ENCODE measurements at regions of chr7 and their contacts with region 1.

Region 1: DNA sequence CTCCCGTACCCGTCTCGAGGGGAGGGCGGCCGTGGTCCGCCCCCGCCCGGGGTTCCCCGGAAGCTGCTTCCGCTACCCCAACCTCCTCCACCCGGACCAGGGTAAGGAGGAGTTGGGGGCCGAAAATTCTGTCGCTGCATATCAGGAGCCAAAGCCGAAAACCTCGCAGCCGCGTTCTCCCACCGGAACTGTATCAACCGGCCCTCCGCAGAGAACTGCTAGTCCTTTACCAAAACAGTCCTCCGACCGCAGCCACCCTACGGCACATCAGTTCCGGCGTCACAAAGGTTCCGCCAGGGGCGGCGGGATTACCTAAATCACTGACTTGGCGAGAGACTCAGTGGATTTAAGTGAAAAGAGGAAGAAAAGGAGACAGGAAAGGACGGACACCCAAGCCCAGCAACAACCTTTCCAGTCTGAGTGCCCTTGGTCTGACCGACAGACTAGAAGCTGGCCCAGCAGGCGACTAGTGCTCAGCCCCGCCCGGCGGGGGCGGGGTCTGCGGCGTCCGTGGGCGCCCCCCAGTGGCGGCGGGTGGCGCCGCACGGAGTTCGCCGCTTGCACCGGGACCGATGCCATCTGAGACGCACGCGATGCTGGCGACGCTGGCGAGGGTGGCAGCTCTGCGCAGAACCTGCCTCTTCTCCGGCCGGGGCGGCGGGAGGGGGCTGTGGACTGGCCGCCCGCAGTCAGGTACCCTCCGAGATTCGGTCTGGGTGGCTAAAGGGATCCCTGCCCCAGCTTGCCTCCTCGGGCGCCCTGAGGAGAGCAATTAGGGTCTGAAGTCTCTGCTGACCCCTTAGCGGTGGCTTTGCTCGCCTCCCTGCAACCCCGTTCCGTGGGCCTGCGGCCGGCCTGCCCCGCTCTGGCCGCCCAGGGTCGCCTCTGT is at the starts of genes MPLKIP and SUGCT:
- DNase-seq: peak; percentile 76 to 79
- ATAC-seq: peak; percentile 93 to 94
- H3K4me3 ChIP-seq: peak within 1 kb of the TSS; percentile 81 to 98 (median 92)
- H3K27ac ChIP-seq: peak within 1 kb of the TSS; percentile 89 to 98 (median 92)
- H3K4me1 ChIP-seq: peaks cover 32 to 39% of the 10 kb centered on the region in 2 donors
- H3K27me3 ChIP-seq: no peaks in the 10 kb centered on the region
- CTCF ChIP-seq: peak; percentile 88 to 100 (median 96)
- POLR2A ChIP-seq: peak; percentile 56 to 74
- total RNA-seq, gene MPLKIP: 19.1 to 27.9 (median 23.8) TPM
- total RNA-seq, gene SUGCT: 2.3 to 3.5 (median 2.9) TPM

Region 2: GRCh38 chr7:38360776-38361175 is 1773.9 kb before region 1 on chr7:
- in situ Hi-C with region 1: no loop called
- intact Hi-C with region 1: no loop called
- DNase-seq: no peak
- ATAC-seq: no peak
- H3K4me3 ChIP-seq: no peak overlapping the region
- H3K27ac ChIP-seq: no peak overlapping the region
- H3K4me1 ChIP-seq: no peaks in the 10 kb centered on the region
- H3K27me3 ChIP-seq: no peaks in the 10 kb centered on the region
- CTCF ChIP-seq: no peak
- POLR2A ChIP-seq: no peak

Region 3: DNA sequence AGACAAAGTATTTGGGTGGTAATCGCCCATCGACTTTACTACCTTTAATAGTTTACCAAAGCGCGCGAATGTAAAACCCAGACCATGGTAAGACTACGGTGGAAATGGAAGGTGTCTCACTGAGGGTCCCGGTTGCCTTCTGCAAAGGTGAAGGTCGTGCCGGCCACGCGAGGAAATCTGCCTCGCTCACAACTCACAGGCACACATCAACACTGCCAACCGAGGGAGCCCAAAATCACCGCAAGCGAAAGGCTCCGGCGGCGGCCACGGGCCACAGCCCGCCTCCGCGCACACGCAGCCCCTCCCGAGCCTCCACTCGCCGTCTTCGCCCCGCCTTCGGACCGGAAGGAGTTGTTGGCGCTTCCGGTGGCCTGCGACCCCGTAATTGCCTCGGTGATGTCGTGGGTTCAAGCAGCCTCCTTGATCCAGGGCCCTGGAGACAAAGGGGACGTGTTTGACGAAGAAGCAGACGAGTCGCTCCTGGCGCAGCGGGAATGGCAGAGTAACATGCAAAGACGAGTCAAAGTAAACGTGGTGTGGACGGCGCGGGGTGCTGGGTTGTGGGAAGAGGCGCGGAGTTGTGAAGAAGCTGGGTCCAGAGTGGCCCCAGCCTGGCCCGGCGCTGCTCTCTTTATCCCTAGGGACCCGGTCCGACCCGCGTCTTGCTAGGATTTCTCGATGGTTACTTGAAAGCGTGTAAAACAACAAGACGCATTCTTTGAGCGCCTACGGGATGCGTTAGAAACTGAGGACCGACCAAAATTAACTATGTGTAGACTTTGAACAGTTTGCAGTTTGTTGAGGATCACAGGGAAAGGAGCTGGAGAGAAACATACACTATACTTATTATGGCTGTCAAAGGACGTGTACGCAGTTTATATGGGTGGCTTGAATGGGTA is 568.4 kb before region 1 on chr7 and contains the start of gene YAE1:
- in situ Hi-C with region 1: no loop called
- intact Hi-C with region 1: loop called (anchors 10 kb)
- DNase-seq: peak; percentile 56 to 62
- ATAC-seq: peak; percentile 94 to 96
- H3K4me3 ChIP-seq: peak within 1 kb of the TSS; percentile 79 to 90 (median 86)
- H3K27ac ChIP-seq: peak within 1 kb of the TSS; percentile 59 to 83 (median 77)
- H3K4me1 ChIP-seq: peaks cover 8 to 18% of the 10 kb centered on the region in 2 donors
- H3K27me3 ChIP-seq: no peaks in the 10 kb centered on the region
- CTCF ChIP-seq: no peak
- POLR2A ChIP-seq: peak; percentile 35 to 37
- total RNA-seq, gene YAE1: 4.6 to 20.2 (median 10.2) TPM

Region 4: GRCh38 chr7:39894904-39895303 is 239.8 kb before region 1 on chr7:
- in situ Hi-C with region 1: loop called in 1 of 4 experiments (anchors 10 kb)
- intact Hi-C with region 1: loop called (anchors 1 kb)
- DNase-seq: no peak
- ATAC-seq: no peak
- H3K4me3 ChIP-seq: no peak overlapping the region
- H3K27ac ChIP-seq: no peak overlapping the region
- H3K4me1 ChIP-seq: peaks cover 0 to 3% of the 10 kb centered on the region in 2 donors
- H3K27me3 ChIP-seq: no peaks in the 10 kb centered on the region
- CTCF ChIP-seq: no peak
- POLR2A ChIP-seq: no peak

Region 5: DNA sequence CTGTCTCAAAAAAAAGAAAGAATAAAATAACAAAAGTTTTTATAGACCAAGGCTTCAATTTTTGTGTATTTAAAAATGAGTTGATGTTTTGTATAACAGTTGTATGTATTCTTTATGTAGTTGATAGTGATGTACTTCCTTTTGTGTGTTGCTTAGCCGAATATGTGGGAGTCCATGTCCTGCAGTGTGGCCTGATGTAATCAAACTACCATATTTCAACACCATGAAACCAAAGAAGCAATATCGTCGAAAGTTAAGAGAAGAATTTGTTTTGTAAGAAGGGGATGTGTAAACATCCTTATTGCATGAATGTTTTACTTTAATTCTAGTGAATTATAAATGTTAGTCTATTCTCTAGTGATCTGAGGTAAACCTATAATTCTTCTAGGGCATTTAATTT is 56.8 kb before region 1 on chr7:
- in situ Hi-C with region 1: no loop called
- intact Hi-C with region 1: loop called (anchors 5 kb)
- DNase-seq: no peak
- ATAC-seq: no peak
- H3K4me3 ChIP-seq: no peak overlapping the region
- H3K27ac ChIP-seq: no peak overlapping the region
- H3K4me1 ChIP-seq: no peaks in the 10 kb centered on the region
- H3K27me3 ChIP-seq: no peaks in the 10 kb centered on the region
- CTCF ChIP-seq: no peak
- POLR2A ChIP-seq: no peak

Region 6: GRCh38 chr7:40283391-40283790 is 148.7 kb after region 1 on chr7:
- in situ Hi-C with region 1: no loop called
- intact Hi-C with region 1: no loop called
- DNase-seq: no peak
- ATAC-seq: no peak
- H3K4me3 ChIP-seq: no peak overlapping the region
- H3K27ac ChIP-seq: no peak overlapping the region
- H3K4me1 ChIP-seq: no peaks in the 10 kb centered on the region
- H3K27me3 ChIP-seq: no peaks in the 10 kb centered on the region
- CTCF ChIP-seq: no peak
- POLR2A ChIP-seq: no peak

Region 7: DNA sequence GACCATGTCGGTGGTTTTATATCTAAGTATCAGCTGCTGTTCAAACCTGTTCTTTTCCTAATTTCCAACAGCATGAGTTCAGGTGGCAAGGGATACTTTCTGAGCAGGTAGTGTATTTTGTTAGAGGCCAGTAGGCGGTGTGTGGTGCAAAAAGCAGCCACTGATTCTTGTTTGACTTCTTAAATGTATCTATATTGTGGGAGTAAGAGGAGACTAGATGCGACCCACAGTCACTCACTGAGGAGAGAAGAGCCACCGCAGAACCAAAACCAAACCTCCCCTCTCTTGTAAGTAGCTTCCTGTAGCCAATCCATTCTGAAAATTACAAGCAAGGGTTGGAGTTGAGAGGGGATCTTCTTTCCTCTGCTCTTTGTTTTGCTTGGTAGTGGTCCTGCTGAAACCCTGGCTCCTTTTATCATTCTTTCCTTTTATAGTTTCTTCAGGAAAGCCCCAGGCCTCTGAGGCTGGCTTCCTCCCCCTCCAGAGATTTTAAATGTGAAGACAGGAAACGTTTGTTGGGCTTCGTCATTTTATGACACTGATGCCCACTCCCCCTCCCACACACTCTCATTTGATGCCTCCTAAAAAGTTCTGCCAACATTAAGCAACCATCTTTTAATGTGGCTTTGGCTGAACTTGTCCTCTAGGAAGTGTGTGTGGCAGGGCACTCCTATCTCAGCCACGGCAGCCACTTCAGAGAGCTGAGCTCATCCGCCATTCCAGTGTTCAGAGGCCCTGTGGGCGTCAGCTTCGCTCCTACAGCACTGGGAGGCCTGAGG is 566.2 kb after region 1 on chr7:
- in situ Hi-C with region 1: no loop called
- intact Hi-C with region 1: no loop called
- DNase-seq: no peak
- ATAC-seq: no peak
- H3K4me3 ChIP-seq: no peak overlapping the region
- H3K27ac ChIP-seq: no peak overlapping the region
- H3K4me1 ChIP-seq: no peaks in the 10 kb centered on the region
- H3K27me3 ChIP-seq: no peaks in the 10 kb centered on the region
- CTCF ChIP-seq: no peak
- POLR2A ChIP-seq: no peak

Measured in gastrocnemius medialis (tissue), 4 donors.